ENCODE measurements at regions of chr6 and their contacts with region 1.

Region 1: DNA sequence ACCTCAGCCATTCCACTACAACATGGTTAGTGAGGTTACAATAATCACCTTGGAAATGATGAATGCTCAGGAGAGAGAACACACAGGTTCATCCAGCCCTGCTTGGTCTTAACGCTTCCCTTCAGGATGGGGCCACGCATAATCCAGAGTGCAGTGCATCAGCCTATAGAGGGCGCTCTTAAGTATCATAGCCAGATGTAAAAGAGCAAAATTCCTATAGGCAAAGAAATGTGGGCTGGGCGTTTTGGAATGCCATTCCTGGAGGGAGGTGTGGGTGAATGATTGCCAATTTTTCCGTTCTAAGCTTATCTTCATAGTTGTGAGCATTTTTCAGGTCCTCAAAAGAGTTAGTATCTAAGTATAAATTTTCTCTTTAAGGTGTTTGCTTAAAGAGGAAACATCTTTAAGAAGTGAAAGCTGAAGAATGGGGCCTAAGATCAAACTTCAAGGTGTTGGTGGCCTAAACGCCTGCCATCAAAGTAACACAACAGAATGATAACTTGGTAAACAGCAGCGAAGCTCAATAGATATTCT is 1.8 kb downstream of the RIPOR2 start:
- DNase-seq: peak; percentile 83
- ATAC-seq: peak; percentile 9
- H3K4me3 ChIP-seq: peak overlapping the region; percentile 72 to 100 (median 86)
- H3K4me3 Mint-ChIP-seq: peak overlapping the region; percentile 95
- H3K27ac ChIP-seq: peak overlapping the region; percentile 74 to 93
- H3K27ac Mint-ChIP-seq: peak overlapping the region; percentile 90
- H3K4me1 ChIP-seq: peaks cover 54% of the 10 kb centered on the region in 2 donors
- H3K4me1 Mint-ChIP-seq: peaks cover 68% of the 10 kb centered on the region
- H3K27me3 ChIP-seq: no peaks in the 10 kb centered on the region
- H3K27me3 Mint-ChIP-seq: no peaks in the 10 kb centered on the region
- CTCF ChIP-seq: peak; percentile 89

Region 2: DNA sequence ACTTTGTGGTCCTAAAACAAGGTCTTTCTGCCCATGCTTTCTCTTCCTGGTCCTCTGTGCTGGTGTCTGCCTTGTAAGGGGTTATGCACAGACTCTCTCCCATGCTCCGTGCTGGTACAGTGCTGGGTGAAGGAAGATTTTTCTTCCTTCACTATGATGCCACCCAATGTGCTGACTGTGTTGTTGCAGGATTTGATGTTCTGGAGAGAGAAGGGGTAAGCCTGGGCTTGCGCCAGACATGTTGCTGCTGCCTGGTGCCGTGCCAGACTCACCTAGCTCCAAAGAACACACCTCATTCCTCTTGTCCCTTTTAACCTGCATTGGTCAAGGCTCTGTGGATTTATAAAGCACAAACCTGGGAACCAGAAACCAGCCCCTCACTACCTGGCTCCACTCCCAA is 106.8 kb before region 1 on chr6:
- CTCF ChIA-PET with region 1: no interaction called
- POLR2A ChIA-PET with region 1: no interaction called
- intact Hi-C with region 1: no loop called
- DNase-seq: no peak
- ATAC-seq: no peak
- H3K4me3 ChIP-seq: no peak overlapping the region
- H3K4me3 Mint-ChIP-seq: no peak overlapping the region
- H3K27ac ChIP-seq: peak overlapping the region in 1 of 2 donors; percentile 27
- H3K27ac Mint-ChIP-seq: peak overlapping the region; percentile 46
- H3K4me1 ChIP-seq: no peaks in the 10 kb centered on the region
- H3K4me1 Mint-ChIP-seq: peaks cover 2% of the 10 kb centered on the region
- H3K27me3 ChIP-seq: no peaks in the 10 kb centered on the region
- H3K27me3 Mint-ChIP-seq: no peaks in the 10 kb centered on the region
- CTCF ChIP-seq: no peak

Region 3: GRCh38 chr6:24855395-24856245 is 78.3 kb before region 1 on chr6:
- CTCF ChIA-PET with region 1: interaction called, 73 read pairs
- POLR2A ChIA-PET with region 1: interaction called, 24 read pairs
- intact Hi-C with region 1: loop called (anchors 1 kb)
- DNase-seq: peak; percentile 86
- ATAC-seq: peak; percentile 42
- H3K4me3 ChIP-seq: no peak overlapping the region
- H3K4me3 Mint-ChIP-seq: peak overlapping the region; percentile 46
- H3K27ac ChIP-seq: peak overlapping the region; percentile 60 to 80
- H3K27ac Mint-ChIP-seq: peak overlapping the region; percentile 97
- H3K4me1 ChIP-seq: peaks cover 62% of the 10 kb centered on the region in 2 donors
- H3K4me1 Mint-ChIP-seq: peaks cover 60% of the 10 kb centered on the region
- H3K27me3 ChIP-seq: no peaks in the 10 kb centered on the region
- H3K27me3 Mint-ChIP-seq: no peaks in the 10 kb centered on the region
- CTCF ChIP-seq: peak; percentile 86

Region 4: DNA sequence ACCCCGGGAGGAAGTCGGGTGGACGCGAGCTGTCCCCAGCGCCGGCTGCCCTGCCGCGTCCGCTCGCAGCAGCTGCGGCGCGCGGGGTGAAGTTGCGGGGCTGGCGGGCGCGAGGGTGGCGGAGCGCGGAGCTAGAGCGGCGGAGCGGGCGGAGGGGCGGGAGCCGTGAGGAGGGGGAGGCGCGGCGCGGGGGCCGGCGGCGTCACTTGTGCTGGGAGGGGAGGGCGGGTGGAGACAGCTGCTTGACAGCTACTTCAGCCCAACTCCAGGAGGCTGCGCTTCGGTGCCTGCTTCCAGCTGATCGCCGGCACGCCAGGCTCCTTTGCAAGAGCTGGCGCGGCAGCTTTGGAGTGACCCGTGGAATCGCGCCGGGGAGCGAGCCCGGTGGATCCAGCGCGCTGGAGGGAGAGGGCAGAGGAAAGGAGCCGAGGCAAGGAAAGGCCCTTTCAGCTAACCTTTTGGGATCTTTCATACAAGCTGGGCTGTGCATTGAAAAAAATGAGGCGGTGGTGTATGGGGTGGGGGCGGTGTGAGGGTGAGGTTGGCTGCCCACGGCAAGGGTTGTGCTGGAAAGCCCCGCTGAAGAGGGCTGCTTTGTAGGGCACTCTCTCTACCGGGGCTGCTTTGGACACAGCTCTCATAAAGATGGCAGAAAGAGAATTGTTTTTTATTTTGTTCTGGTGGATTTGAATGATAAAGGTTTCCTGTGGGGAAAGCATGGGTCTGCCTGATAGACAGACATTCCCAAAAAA is 22.8 kb before region 1 on chr6:
- CTCF ChIA-PET with region 1: interaction called, 134 read pairs
- POLR2A ChIA-PET with region 1: interaction called, 46 read pairs
- intact Hi-C with region 1: loop called (anchors 1 kb)
- DNase-seq: no peak
- ATAC-seq: peak; percentile 38
- H3K4me3 ChIP-seq: peak overlapping the region; percentile 45 to 66 (median 58)
- H3K4me3 Mint-ChIP-seq: peak overlapping the region; percentile 90
- H3K27ac ChIP-seq: peak overlapping the region; percentile 83 to 93
- H3K27ac Mint-ChIP-seq: peak overlapping the region; percentile 89
- H3K4me1 ChIP-seq: peaks cover 97 to 98% of the 10 kb centered on the region in 2 donors
- H3K4me1 Mint-ChIP-seq: peaks cover 94% of the 10 kb centered on the region
- H3K27me3 ChIP-seq: no peaks in the 10 kb centered on the region
- H3K27me3 Mint-ChIP-seq: no peaks in the 10 kb centered on the region
- CTCF ChIP-seq: no peak

Region 5: GRCh38 chr6:24960991-24961475 is 27.1 kb after region 1 on chr6:
- CTCF ChIA-PET with region 1: interaction called, 26 read pairs
- POLR2A ChIA-PET with region 1: interaction called, 229 read pairs
- intact Hi-C with region 1: no loop called
- DNase-seq: no peak
- ATAC-seq: no peak
- H3K4me3 ChIP-seq: peak overlapping the region in 1 of 5 experiments; percentile 13
- H3K4me3 Mint-ChIP-seq: peak overlapping the region; percentile 68
- H3K27ac ChIP-seq: peak overlapping the region in 1 of 2 donors; percentile 45
- H3K27ac Mint-ChIP-seq: peak overlapping the region; percentile 88
- H3K4me1 ChIP-seq: peaks cover 63 to 69% of the 10 kb centered on the region in 2 donors
- H3K4me1 Mint-ChIP-seq: peaks cover 74% of the 10 kb centered on the region
- H3K27me3 ChIP-seq: no peaks in the 10 kb centered on the region
- H3K27me3 Mint-ChIP-seq: no peaks in the 10 kb centered on the region
- CTCF ChIP-seq: no peak

Region 6: GRCh38 chr6:24980507-24981387 is 46.8 kb after region 1 on chr6:
- CTCF ChIA-PET with region 1: interaction called, 19 read pairs
- POLR2A ChIA-PET with region 1: no interaction called
- intact Hi-C with region 1: no loop called
- DNase-seq: no peak
- ATAC-seq: no peak
- H3K4me3 ChIP-seq: no peak overlapping the region
- H3K4me3 Mint-ChIP-seq: no peak overlapping the region
- H3K27ac ChIP-seq: no peak overlapping the region
- H3K27ac Mint-ChIP-seq: peak overlapping the region; percentile 71
- H3K4me1 ChIP-seq: peaks cover 13 to 25% of the 10 kb centered on the region in 2 donors
- H3K4me1 Mint-ChIP-seq: peaks cover 54% of the 10 kb centered on the region
- H3K27me3 ChIP-seq: no peaks in the 10 kb centered on the region
- H3K27me3 Mint-ChIP-seq: no peaks in the 10 kb centered on the region
- CTCF ChIP-seq: no peak

Region 7: DNA sequence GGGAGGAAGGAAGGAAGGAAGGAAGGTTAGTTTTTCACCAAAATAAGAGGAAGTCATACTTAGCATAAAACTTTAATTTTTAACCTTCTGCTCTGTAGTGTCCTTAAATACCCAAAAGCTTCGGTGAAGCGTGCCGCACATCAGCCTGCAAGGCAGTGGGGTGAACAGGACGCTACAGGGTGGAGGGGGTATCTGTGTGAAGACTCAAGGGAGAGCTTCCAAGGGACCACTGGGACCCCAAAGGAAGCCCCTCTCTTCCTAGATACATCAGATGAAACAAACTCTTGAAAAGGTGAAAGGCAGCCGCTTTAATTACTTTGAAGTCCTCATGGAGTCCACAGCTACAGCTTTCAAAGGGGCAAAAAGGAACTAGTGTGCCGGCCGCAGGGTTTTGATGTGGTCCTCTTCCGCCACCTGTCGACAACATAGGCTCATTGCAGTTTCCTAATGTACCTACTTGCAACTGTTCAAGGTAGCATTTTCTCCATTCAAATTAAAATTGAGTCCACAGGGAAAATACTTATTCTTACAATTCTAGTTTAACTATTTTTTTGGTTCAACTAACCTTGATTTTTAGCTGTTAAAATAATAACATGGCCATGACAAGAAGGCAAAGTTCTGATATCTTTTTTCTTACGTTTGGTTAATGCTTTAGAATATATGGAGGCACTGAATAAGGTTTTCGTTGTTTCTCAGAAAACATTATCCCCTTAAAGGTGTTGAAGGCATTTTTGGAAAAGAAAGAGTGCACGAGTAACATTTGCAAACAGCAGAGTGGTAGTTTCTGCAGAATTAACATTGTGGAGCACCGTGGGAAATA is 136.8 kb after region 1 on chr6:
- CTCF ChIA-PET with region 1: interaction called, 12 read pairs
- POLR2A ChIA-PET with region 1: no interaction called
- intact Hi-C with region 1: loop called (anchors 5 kb)
- DNase-seq: peak; percentile 93
- ATAC-seq: peak; percentile 97
- H3K4me3 ChIP-seq: peak overlapping the region in 4 of 5 experiments; percentile 31 to 72 (median 48)
- H3K4me3 Mint-ChIP-seq: peak overlapping the region; percentile 86
- H3K27ac ChIP-seq: peak overlapping the region; percentile 74 to 80
- H3K27ac Mint-ChIP-seq: peak overlapping the region; percentile 97
- H3K4me1 ChIP-seq: peaks cover 0 to 4% of the 10 kb centered on the region in 2 donors
- H3K4me1 Mint-ChIP-seq: peaks cover 9% of the 10 kb centered on the region
- H3K27me3 ChIP-seq: no peaks in the 10 kb centered on the region
- H3K27me3 Mint-ChIP-seq: no peaks in the 10 kb centered on the region
- CTCF ChIP-seq: peak; percentile 95